Naive thymus-derived CD8-positive, alpha-beta T cell (primary cell): ENCODE measurements at regions of chr1 and their contacts with region 1.

Region 1: GRCh38 chr1:111755331-111756123 is at the start of gene DDX20:
- DNase-seq: peak; percentile 89 to 97 (median 93)
- ATAC-seq: peak; percentile 88 to 89
- H3K4me3 Mint-ChIP-seq: peak within 1 kb of the TSS; percentile 88 to 99 (median 96)
- H3K27ac Mint-ChIP-seq: peak within 1 kb of the TSS; percentile 96 to 99 (median 98)
- H3K4me1 Mint-ChIP-seq: peaks cover 16 to 48% (median 34%) of the 10 kb centered on the region in 4 donors
- H3K27me3 Mint-ChIP-seq: peaks cover 0 to 2% (median 0%) of the 10 kb centered on the region in 5 donors
- polyA plus RNA-seq, gene DDX20: 8.0 to 12.7 (median 10.0) TPM

Region 2: DNA sequence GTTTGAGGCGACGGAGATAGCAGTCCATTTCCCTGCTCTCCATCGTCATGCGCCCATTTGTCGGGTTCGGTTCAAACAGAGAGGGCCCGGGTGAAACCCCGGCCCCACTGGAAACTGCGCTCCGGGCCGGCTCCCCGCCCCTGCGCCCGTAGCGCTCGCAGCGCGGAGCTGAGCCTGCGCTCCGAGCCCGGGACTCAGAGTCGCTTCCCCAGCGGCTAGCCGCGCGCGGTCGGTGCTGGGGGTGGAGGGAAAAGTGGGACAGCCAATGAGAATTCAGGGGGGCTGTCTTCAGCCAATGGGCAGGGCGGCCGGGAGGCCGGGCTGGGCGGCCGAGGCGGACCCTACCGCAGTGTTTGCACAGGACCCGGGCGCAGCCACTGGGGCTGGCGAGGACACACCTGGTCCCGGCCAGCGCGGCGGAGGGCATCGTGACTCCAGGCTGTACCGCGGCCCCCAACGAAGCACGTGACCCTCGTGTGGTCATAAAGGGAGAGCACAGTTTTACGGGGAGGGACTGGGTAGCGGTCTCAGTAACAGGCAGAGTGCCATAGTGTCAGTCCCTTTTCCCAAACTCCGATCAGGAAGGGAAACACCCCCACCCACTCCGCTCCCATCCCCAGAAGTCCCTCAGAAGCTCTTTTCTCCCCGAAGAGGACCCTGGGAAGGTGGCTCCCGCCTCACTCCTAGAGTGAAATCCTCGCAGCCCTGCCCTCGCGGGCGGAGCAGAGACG is 16.2 kb before region 1 on chr1 and contains the start of gene INKA2:
- POLR2A ChIA-PET with region 1: interaction called, 21 read pairs
- DNase-seq: peak in 9 of 10 donors; percentile 28 to 75 (median 41)
- ATAC-seq: peak; percentile 62 to 69
- H3K4me3 Mint-ChIP-seq: peak within 1 kb of the TSS; percentile 83 to 95 (median 92)
- H3K27ac Mint-ChIP-seq: peak within 1 kb of the TSS in 8 of 10 donors; percentile 7 to 90 (median 74)
- H3K4me1 Mint-ChIP-seq: peaks cover 15 to 33% (median 20%) of the 10 kb centered on the region in 4 donors
- H3K27me3 Mint-ChIP-seq: peaks cover 10 to 37% (median 24%) of the 10 kb centered on the region in 5 donors
- polyA plus RNA-seq, gene INKA2: not detected

Region 3: DNA sequence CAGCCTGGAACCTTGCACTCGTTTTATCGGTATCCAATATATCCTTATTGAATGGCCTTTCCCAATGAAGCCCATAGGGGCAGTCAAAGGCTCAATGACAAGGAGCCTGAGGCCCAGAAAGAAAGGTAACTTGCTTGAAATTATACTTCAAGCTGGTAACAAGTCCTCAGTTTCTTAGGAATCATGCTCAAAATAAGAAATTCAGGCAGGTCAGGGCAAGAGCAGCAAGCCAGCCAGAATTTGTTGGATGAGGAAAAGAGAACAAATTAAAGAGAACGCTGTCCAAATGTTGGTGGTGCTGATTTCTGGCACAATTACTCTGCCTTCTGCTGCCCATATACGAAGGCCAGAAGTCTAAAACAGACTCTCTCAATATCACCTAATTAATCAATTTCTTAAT is 77.8 kb after region 1 on chr1:
- POLR2A ChIA-PET with region 1: no interaction called
- DNase-seq: no peak
- ATAC-seq: no peak
- H3K4me3 Mint-ChIP-seq: no peak overlapping the region
- H3K27ac Mint-ChIP-seq: no peak overlapping the region
- H3K4me1 Mint-ChIP-seq: no peaks in the 10 kb centered on the region
- H3K27me3 Mint-ChIP-seq: peaks cover 15 to 45% (median 23%) of the 10 kb centered on the region in 5 donors